ENCODE measurements at regions of chr16 and their contacts with region 1.

Region 1: GRCh38 chr16:4734063-4734729 is at the starts of genes ANKS3 and DNAAF8:
- H3K4me3 ChIP-seq: peak within 1 kb of the TSS; percentile 94
- H3K27ac ChIP-seq: peak within 1 kb of the TSS; percentile 91
- H3K4me1 ChIP-seq: no peaks in the 10 kb centered on the region
- CTCF ChIP-seq: no peak

Region 2: DNA sequence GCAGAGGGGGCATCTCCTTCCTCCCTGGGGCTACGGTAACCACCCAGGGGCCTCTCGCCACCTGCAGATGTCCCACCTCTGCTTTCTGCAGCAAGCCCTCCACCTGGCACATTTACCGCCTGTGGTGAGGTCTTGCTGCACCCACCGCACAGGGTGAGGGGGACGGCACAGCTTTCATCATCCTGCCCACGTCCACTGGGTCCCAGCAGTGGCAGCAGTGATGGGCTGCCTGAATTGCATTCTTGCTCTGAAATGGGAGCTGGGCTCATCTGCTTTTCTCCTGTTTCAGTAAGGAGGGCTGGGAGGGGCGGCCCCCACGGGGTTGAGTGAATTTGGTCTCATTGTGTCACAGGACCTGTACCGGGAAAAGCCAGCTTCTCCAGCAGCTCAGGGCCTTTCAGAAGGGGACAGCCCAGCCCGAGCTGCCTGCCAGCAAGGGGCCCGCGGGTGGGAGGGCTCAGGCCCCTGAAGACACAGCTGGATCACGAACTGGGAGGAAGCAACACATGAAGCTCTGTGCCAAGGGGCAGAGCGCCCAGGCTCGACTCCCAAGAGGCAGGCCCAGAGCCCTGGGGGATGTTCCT is 12.9 kb after region 1 on chr16:
- CTCF ChIA-PET with region 1: no interaction called
- POLR2A ChIA-PET with region 1: interaction called, 12 read pairs
- H3K4me3 ChIP-seq: no peak overlapping the region
- H3K27ac ChIP-seq: no peak overlapping the region
- H3K4me1 ChIP-seq: no peaks in the 10 kb centered on the region
- CTCF ChIP-seq: no peak

Region 3: DNA sequence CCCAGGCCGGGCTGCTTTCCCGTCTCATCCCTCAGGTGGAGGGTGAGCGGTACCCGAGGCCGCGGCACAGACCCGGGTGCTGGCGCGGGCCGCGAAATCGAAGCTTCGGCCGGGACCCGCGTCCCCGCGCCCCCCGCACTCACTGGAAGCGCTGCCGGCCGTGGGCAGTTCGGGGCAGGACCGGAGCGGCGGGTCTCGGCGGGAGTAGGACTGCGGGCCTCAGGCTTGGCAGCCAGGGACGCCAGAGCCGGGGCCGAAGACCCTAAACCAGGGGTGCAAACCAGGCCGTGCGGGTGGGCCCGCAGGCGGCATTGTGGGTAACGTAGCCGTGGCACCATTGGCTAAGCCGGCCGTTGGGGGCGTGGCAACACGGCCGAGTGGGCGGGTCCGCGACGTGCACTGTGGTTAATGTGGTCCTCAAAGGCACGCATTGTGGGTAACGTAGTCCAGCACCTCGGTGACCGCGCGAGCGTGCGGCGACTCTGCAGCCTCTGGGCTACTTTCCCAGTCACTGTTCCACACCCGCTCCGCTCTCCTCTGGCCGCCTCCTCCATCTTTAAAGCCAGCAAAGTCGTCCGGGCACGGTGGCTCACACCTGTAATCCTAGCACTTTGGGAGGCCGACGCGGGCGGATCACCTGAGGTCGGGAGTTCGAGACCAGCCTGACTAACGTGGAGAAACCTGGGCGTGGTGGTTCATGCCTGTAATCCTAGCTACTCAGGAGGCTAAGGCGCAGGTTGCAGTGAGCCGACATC is 32.9 kb after region 1 on chr16 and contains the start of gene ZNF500:
- CTCF ChIA-PET with region 1: no interaction called
- POLR2A ChIA-PET with region 1: interaction called, 43 read pairs
- H3K4me3 ChIP-seq: peak within 1 kb of the TSS; percentile 76
- H3K27ac ChIP-seq: peak within 1 kb of the TSS; percentile 88
- H3K4me1 ChIP-seq: no peaks in the 10 kb centered on the region; the same call in 1 of the 2 replicates
- CTCF ChIP-seq: no peak

Region 4: DNA sequence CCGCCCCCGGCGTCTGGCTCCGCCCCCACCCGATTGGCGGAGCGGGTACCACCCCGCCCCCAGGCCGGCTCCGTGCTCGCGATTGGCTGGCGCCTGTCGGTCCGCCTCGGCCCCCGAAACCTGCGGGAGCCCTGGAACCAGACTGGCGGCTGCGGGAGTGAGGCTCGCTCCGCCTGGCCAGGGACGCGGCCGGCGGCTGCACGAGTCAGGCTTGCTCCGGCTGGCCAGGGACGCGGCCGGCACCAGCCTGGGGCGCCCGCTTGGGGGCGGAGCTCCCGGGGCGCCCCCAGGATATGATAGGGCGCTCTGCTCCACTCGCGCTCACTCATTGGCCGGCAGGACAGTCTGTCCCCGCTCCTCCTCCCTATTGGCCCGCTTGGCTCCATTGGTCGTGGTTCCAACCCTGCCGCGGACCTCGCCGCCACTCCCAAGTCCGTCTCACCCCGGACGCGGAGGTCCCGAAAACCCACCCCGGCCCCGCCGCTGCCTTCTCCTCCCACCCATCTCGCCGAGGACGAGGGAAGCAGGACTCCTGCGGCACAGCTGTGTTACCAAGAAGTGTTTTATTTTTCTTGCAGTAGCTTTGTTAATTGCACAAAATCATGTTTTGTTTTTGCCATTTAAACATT is 68.6 kb after region 1 on chr16:
- CTCF ChIA-PET with region 1: no interaction called
- POLR2A ChIA-PET with region 1: interaction called, 15 read pairs
- H3K4me3 ChIP-seq: peak overlapping the region; percentile 80
- H3K27ac ChIP-seq: peak overlapping the region; percentile 69
- H3K4me1 ChIP-seq: peaks cover 3% of the 10 kb centered on the region; the same call in 1 of the 2 replicates
- CTCF ChIP-seq: no peak

Region 5: GRCh38 chr16:4957720-4958509 is 223.7 kb after region 1 on chr16 and contains the start of gene SEC14L5:
- CTCF ChIA-PET with region 1: interaction called, 10 read pairs
- POLR2A ChIA-PET with region 1: interaction called, 3 read pairs
- H3K4me3 ChIP-seq: peak within 1 kb of the TSS; percentile 28
- H3K27ac ChIP-seq: no peak within 1 kb of the TSS; the same call in 1 of the 2 replicates
- H3K4me1 ChIP-seq: peaks cover 6% of the 10 kb centered on the region; the same call in 1 of the 2 replicates
- CTCF ChIP-seq: no peak